Heart left ventricle (tissue), 16 donors: ENCODE measurements at regions of chr4 and their contacts with region 1.

Region 1: GRCh38 chr4:37891260-37892159 is 626 bp downstream of the TBC1D1 start:
- DNase-seq: peak in 4 of 5 donors; percentile 47 to 69 (median 54)
- ATAC-seq: peak; percentile 10 to 52 (median 28)
- H3K4me3 ChIP-seq: peak overlapping the region; percentile 79 to 99 (median 93)
- H3K27ac ChIP-seq: peak overlapping the region; percentile 88 to 96 (median 94)
- H3K4me1 ChIP-seq: peaks cover 0 to 43% (median 10%) of the 10 kb centered on the region in 12 donors
- H3K27me3 ChIP-seq: no peaks in the 10 kb centered on the region
- CTCF ChIP-seq: peak in 3 of 12 donors; percentile 9 to 29 (median 23)
- POLR2A ChIP-seq: no peak

Region 2: DNA sequence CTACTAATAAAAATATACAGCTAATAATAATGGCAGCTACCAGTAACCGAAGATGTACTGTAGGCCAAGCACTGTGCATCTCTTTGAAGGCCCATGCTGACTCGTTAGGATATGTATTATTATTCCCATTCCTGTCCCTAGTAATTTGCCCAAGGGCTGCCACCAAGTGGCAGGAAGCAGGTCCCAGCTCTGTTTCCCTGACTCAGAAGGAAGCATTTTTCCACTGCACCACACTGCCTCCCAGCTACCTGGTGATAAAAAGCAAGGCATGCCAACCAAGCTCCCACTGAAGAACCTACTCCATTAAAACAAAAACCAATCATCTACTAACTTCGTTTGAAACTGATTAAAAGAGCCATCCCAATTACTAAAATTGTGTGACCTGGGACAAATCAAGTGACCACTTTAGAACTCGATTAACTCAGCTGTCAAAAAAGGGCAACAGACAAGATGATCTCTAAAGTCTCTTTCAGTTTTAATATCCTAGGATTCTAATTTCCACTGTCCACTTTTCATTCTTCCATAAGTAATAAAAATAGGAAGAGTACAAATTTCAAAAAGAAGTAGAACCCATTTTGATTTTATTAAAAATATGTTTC is 89.3 kb before region 1 on chr4:
- intact Hi-C with region 1: loop called in 8 of 10 experiments (anchors 1 to 10 kb)
- DNase-seq: peak in 4 of 5 donors; percentile 36 to 56 (median 42)
- ATAC-seq: peak; percentile 58 to 88 (median 84)
- H3K4me3 ChIP-seq: no peak overlapping the region
- H3K27ac ChIP-seq: no peak overlapping the region
- H3K4me1 ChIP-seq: peaks cover 0 to 4% (median 0%) of the 10 kb centered on the region in 12 donors
- H3K27me3 ChIP-seq: no peaks in the 10 kb centered on the region
- CTCF ChIP-seq: peak; percentile 16 to 74 (median 53)
- POLR2A ChIP-seq: no peak

Region 3: DNA sequence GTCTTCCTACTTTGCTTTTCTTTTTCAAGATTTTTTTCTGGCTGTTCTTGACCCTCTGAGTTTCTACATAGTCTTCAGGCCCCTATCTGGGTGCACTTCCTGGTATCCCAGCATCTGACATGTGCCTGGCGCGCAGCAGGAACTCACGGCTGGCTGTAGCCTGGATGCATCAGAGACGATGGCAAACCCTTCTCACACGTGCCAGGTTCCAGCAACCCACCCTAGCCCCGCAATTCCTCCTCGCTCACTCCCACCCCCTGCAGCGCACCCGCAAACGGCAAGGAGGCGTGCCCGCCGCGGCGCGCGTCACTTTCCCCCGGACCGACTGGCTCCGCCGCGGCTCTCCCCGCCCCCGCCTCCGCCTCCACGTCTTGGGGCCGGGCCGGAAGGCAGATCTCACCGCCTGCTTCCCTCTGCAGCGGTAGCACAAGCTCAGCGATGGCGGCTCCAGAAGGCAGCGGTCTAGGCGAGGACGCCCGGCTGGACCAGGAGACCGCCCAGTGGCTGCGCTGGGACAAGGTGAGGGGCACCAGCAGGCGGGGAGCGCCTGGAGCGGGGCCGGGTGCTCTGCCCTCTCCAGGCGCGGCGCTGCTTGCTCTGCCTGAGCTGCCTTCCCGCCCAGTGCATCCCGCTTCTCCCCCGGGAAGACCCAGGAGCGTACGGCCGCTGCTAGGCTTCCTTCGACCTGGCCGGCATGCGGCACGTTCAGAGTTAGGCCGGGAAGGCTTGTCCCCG is 65.0 kb before region 1 on chr4 and contains the start of gene PGM2:
- intact Hi-C with region 1: loop called in 9 of 10 experiments (anchors 2 to 10 kb)
- DNase-seq: peak; percentile 92 to 95 (median 93)
- ATAC-seq: peak; percentile 86 to 97 (median 96)
- H3K4me3 ChIP-seq: peak within 1 kb of the TSS; percentile 54 to 97 (median 88)
- H3K27ac ChIP-seq: peak within 1 kb of the TSS; percentile 55 to 95 (median 90)
- H3K4me1 ChIP-seq: peaks cover 3 to 43% (median 20%) of the 10 kb centered on the region in 12 donors
- H3K27me3 ChIP-seq: no peaks in the 10 kb centered on the region
- CTCF ChIP-seq: peak in 4 of 12 donors; percentile 6 to 31 (median 24)
- POLR2A ChIP-seq: peak in 1 of 2 donors; percentile 89
- total RNA-seq, gene PGM2: 6.8 to 18.4 (median 8.7) TPM

Region 4: GRCh38 chr4:37964734-37965457 is 73.4 kb after region 1 on chr4:
- intact Hi-C with region 1: loop called in 2 of 10 experiments (anchors 5 kb)
- DNase-seq: no peak
- ATAC-seq: peak in 1 of 4 donors; percentile 36
- H3K4me3 ChIP-seq: no peak overlapping the region
- H3K27ac ChIP-seq: peak overlapping the region in 1 of 12 donors; percentile 38
- H3K4me1 ChIP-seq: peaks cover 0 to 35% (median 9%) of the 10 kb centered on the region in 12 donors
- H3K27me3 ChIP-seq: no peaks in the 10 kb centered on the region
- CTCF ChIP-seq: no peak
- POLR2A ChIP-seq: no peak

Region 5: GRCh38 chr4:37970487-37971101 is 79.1 kb after region 1 on chr4:
- intact Hi-C with region 1: loop called in 5 of 10 experiments (anchors 5 kb)
- DNase-seq: peak; percentile 76 to 87 (median 85)
- ATAC-seq: peak; percentile 80 to 95 (median 94)
- H3K4me3 ChIP-seq: no peak overlapping the region
- H3K27ac ChIP-seq: peak overlapping the region in 11 of 12 donors; percentile 42 to 83 (median 72)
- H3K4me1 ChIP-seq: peaks cover 0 to 47% (median 21%) of the 10 kb centered on the region in 12 donors
- H3K27me3 ChIP-seq: no peaks in the 10 kb centered on the region
- CTCF ChIP-seq: peak; percentile 52 to 75 (median 62)
- POLR2A ChIP-seq: no peak

Region 6: DNA sequence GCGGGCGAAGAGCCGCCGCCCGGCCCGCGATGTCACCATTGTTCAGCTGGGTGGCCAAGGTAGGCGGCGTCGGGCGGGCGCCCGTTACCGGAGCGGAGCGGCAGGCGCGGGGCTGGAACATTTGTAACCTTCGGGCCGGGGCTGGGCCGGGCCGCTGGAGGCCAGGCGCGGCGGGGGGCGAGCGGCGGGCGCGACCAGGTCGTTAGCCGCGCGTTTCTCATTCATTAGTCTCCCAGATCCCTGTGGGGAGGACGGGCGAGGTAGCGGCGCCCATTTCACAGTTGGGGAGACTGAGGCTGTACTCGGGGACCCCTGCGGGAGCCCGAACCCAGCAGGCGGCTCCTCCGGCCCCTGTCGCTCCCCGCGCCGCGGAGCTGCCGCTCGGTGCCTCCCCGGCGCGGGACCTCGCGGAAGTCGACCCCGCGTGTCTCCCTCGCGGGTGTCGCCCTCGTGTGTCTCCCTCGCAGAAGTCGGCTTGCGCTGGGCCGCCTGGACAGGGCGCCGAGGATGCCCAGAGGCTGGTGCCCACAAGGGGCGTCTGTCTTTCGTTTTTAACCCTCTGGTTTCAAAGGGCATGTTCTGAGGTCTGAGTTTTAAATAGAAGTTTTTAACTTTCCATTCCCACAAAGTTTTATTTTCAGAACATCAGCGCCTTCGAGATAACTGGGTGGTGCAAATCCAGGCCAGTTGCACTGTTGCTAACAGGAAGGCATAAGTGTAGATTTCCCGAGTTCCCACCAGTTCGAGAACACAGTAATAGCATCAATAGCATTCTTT is 86.1 kb after region 1 on chr4:
- intact Hi-C with region 1: loop called in 8 of 10 experiments (anchors 2 to 5 kb)
- DNase-seq: peak; percentile 78 to 89 (median 85)
- ATAC-seq: peak; percentile 72 to 88 (median 85)
- H3K4me3 ChIP-seq: peak overlapping the region; percentile 82 to 97 (median 92)
- H3K27ac ChIP-seq: peak overlapping the region; percentile 91 to 99 (median 98)
- H3K4me1 ChIP-seq: peaks cover 0 to 60% (median 32%) of the 10 kb centered on the region in 12 donors
- H3K27me3 ChIP-seq: no peaks in the 10 kb centered on the region
- CTCF ChIP-seq: peak; percentile 57 to 88 (median 72)
- POLR2A ChIP-seq: no peak

Region 7: GRCh38 chr4:38034986-38035882 is 143.7 kb after region 1 on chr4:
- intact Hi-C with region 1: loop called in 7 of 10 experiments (anchors 2 to 10 kb)
- DNase-seq: peak in 1 of 5 donors; percentile 36
- ATAC-seq: peak in 3 of 4 donors; percentile 60 to 65 (median 65)
- H3K4me3 ChIP-seq: no peak overlapping the region
- H3K27ac ChIP-seq: peak overlapping the region in 1 of 12 donors; percentile 56
- H3K4me1 ChIP-seq: peaks cover 0 to 12% (median 1%) of the 10 kb centered on the region in 12 donors
- H3K27me3 ChIP-seq: no peaks in the 10 kb centered on the region
- CTCF ChIP-seq: peak; percentile 48 to 83 (median 70)
- POLR2A ChIP-seq: no peak

Region 8: DNA sequence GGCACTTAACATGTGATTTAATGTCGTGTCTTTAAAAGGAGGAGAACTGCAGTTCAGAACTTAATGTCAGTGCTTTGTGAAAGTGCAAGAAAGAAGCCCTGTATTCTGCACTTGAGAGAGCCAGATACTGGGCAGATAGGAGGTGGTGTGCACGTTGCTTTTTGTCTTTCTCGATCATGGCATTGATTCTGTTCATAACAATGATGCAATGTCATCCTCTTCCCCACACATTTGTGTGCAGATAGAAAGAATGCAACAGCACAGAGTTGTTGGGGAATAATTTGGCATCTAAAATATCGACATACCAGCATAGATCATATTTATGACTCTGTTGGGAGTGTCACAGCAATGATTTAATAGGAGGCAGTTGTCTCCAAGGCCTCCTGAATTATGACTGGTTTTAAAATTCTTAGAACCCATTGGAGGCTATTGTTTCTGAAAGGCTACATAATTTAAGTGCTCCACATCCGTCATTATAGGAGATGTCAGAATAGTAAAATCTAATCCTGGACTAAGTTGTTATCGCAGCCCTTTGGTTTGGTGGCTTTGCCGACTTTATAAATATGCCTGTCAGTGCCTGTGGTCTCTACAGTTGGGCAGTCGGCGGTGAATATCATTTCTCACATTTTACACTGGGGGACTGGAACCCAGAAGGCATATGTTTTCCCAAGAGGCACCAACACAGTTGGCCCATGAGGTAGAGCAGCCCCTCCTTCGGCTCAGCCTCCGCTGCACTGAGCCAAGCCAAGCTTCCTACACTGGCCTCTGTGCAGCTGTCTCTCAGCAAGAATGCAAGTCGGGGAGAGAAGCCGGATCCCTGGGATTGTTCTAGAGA is 193.6 kb after region 1 on chr4:
- intact Hi-C with region 1: no loop called
- DNase-seq: no peak
- ATAC-seq: peak in 3 of 4 donors; percentile 12 to 35 (median 29)
- H3K4me3 ChIP-seq: no peak overlapping the region
- H3K27ac ChIP-seq: peak overlapping the region in 8 of 12 donors; percentile 18 to 95 (median 60)
- H3K4me1 ChIP-seq: peaks cover 0 to 84% (median 62%) of the 10 kb centered on the region in 12 donors
- H3K27me3 ChIP-seq: no peaks in the 10 kb centered on the region
- CTCF ChIP-seq: no peak
- POLR2A ChIP-seq: no peak